ENCODE measurements at regions of chr7 and their contacts with region 1.

Region 1: DNA sequence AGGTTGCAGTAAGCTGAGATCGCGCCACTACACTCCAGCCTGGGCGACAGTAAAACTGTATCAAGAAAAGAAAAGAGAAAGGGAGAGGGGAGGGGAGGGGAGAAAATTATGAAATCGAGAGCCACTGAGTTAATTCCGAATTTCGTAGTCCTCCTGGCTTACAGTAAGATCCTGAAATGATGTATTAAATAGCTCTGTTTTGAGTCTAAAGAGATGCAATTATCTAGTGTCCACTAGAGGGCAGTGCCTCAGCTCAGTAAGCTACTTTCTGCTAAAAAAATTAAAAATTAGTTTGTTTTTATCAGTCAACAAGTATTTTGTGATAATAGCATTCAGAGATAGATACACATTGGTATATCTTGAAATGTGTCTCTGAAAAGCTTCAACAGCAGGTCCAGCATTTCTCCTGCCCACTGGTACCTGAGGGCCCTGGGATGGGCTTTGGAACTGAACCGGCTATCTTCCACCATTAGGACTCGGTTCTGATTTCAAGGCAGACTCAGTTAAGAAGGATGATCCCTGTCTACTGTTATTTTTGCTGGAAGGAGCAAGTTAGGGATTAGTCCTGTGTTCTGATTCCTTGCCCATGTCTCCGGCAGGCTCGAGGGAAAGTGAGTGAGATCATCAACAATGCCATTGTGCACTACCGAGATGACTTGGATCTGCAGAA is 19.5 kb downstream of the TSPAN33 start:
- DNase-seq: no peak
- H3K4me3 ChIP-seq: no peak overlapping the region
- H3K27ac ChIP-seq: no peak overlapping the region
- H3K4me1 ChIP-seq: peaks cover 0 to 8% (median 3%) of the 10 kb centered on the region in 4 donors
- H3K27me3 ChIP-seq: no peaks in the 10 kb centered on the region
- CTCF ChIP-seq: peak; percentile 64 to 94 (median 79)
- EP300 ChIP-seq: no peak
- POLR2A ChIP-seq: no peak

Region 2: GRCh38 chr7:129212126-129212525 is 48.1 kb after region 1 on chr7:
- in situ Hi-C with region 1: no loop called
- intact Hi-C with region 1: loop called (anchors 1 kb)
- DNase-seq: no peak
- H3K4me3 ChIP-seq: no peak overlapping the region
- H3K27ac ChIP-seq: no peak overlapping the region
- H3K4me1 ChIP-seq: no peaks in the 10 kb centered on the region
- H3K27me3 ChIP-seq: no peaks in the 10 kb centered on the region
- CTCF ChIP-seq: no peak
- EP300 ChIP-seq: no peak
- POLR2A ChIP-seq: no peak

Region 3: DNA sequence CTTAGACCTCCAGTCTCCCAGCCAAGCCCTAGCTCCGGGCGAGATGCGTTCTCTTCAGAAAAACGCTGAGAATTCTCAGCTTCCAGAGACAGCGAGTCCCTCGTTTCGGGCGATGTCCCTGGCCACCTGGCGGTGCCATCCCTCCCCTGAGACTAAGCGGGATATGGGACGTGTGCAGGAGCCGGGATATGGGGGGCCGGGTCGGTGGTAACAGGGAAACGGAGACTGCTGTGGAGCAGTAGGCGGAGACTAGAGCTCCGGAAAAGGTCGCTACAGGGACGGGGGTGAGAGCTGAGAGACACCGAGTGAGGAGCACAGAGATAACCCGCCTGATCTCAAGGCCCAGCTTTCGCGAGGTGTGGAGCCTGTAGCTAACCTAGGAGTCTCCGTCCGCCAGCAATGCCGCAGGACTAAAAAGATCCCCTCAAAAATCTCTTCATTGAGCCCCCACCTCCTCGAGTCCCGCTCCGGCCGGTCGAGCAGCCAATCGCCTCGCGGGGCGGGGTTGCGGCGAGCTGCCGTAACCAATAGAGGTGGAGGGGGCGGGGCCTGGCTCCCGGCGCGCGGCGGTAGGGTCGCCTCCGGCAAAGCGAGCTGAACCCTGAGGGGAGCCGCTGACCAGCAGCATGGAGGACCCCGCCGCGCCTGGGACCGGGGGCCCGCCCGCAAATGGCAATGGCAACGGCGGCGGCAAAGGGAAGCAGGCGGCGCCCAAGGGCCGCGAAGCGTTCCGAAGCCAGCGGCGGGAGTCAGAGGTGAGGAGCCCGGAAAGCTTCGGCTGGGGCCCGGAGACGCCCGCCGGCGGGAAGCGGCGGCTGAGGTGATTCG is 270.1 kb after region 1 on chr7 and contains the start of gene STRIP2:
- in situ Hi-C with region 1: no loop called
- intact Hi-C with region 1: loop called (anchors 10 kb)
- DNase-seq: peak; percentile 91
- H3K4me3 ChIP-seq: peak within 1 kb of the TSS; percentile 35 to 90 (median 66)
- H3K27ac ChIP-seq: peak within 1 kb of the TSS; percentile 34 to 70 (median 51)
- H3K4me1 ChIP-seq: peaks cover 0 to 15% (median 10%) of the 10 kb centered on the region in 4 donors
- H3K27me3 ChIP-seq: peaks cover 32% of the 10 kb centered on the region
- CTCF ChIP-seq: peak in 1 of 5 experiments; percentile 12
- EP300 ChIP-seq: no peak
- POLR2A ChIP-seq: no peak
- total RNA-seq, gene STRIP2: 0.82 to 1.1 TPM in 2 of 4 donors, not detected in the others